ENCODE measurements at regions of chr14 and their contacts with region 1.

Region 1: DNA sequence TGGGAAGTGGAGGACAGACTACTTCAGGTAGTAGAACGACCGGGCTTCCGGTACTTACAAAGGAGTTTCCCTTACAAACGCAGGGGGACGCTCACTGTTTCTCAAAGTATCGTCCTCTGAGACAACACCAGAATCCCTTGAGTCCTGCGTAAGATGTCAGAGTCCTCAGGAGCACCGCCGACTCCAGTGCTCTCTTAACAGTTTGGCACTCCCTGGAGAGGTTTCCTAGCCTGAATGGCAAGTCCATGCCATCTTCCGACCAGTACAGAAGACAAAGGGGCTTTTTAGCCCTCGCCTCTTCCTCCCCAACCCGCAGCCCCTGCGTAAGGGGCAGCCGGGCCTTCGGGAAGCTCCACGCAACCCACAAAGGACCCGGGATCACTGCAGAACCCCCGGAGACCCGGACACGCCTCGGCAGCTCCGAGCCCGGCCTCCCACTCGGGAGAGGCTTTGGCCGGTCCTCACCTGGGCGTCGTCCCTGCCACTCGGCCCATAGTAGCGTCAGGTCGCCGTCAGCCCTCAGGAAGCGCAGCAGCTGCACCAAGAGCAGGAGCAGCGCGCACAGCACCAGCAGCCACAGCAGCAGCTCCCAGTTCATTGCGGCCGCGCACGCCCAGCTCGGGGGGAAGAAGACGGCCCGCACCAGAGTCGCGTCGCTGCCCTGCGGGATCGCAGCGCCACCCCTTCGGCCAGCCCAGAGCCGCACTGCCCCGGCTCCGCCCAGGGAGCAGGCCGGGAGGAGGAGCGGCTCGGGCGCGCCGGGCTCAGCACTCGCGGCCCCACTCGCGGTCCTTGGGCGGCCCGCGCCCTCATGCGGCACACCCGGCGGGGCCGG is at the start of gene DHRS7:
- DNase-seq: peak; percentile 39 to 90
- H3K4me3 ChIP-seq: peak within 1 kb of the TSS; percentile 75 to 92
- H3K27ac ChIP-seq: peak within 1 kb of the TSS; percentile 93 to 97
- H3K4me1 ChIP-seq: peaks cover 0 to 25% of the 10 kb centered on the region in 2 donors
- H3K27me3 ChIP-seq: no peaks in the 10 kb centered on the region
- CTCF ChIP-seq: peak in 2 of 3 experiments; percentile 51 to 59
- total RNA-seq, gene DHRS7: 34.8 TPM

Region 2: DNA sequence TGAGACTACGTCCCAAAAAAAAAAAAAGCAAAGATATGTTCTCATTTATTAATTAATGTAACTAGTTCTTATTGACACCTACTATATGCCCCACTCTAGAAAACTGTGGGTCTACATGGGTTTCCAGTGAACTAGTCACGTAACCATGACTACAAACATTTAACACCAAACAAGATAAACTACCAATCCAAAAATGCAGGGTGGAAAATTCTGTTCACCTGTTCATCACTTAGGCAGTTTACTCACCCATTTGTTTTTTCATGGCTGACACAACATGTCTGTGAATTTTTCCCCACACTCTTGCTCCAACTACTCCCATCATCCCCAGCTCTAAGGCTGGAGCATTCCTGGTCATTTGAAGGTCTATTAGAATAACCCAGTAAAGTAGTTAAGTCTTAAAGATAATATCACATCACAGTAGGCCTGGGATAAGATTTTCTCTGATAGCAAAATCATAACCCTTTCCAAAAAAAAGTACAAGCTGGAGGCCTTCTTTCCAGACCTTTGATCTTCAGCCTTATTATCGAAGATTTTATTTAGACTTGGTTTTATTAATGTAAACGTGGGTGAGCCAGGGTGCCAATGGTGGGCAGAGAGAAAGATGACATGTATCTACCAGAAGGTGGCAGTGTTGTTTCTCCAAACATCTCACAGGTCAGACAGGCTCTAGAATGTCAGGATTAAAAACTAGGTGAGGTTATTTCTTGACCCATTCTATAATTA is 1038.1 kb before region 1 on chr14:
- intact Hi-C with region 1: loop called (anchors 10 kb)
- DNase-seq: no peak
- H3K4me3 ChIP-seq: no peak overlapping the region
- H3K27ac ChIP-seq: no peak overlapping the region
- H3K4me1 ChIP-seq: no peaks in the 10 kb centered on the region
- H3K27me3 ChIP-seq: no peaks in the 10 kb centered on the region
- CTCF ChIP-seq: peak; percentile 77 to 81 (median 78)

Region 3: DNA sequence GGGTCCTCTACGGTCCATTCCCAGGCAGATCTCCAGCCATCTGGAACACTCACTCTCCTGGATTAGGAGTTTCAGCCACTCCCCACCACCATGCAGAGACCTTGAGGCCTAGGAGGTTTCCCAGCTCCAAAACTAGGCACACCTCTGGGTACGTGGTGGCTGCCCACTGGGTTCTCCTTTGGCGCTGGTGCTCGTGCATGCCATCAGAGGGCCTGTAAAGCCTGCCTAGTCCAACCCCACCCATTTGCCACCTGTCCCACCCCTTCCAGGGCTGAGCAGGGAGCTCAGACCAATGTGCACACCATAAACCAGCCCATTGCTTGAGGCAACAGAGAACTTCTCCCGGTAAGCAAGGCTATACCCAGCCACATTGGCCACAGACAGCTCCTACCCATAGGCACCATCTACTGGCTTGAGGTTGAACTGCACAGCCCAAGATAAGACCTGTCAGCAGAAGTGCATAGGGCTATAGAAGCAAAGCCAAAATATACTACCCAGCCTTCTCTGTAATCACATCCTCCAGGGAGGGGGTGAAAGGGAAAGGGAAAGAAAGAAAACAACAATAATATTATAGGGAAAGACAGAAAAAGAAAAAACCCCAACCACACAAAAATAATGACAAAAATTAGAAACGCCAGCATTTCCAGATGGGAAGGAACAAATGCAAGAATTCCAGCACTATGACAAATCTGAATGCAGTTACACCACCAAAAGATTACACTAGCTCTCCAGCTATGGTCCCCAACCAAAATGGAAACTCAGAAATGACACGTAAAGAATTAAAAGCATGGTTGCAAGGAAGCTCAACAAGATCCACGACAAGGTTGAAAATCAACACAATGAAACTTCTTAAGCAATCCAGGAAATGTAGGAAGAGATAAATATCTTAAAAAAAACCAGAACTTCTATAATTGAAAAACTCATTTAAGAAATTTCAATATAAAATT is 476.4 kb before region 1 on chr14:
- intact Hi-C with region 1: loop called (anchors 10 kb)
- DNase-seq: peak in 1 of 2 donors; percentile 83
- H3K4me3 ChIP-seq: no peak overlapping the region
- H3K27ac ChIP-seq: no peak overlapping the region
- H3K4me1 ChIP-seq: peaks cover 0 to 4% of the 10 kb centered on the region in 2 donors
- H3K27me3 ChIP-seq: no peaks in the 10 kb centered on the region
- CTCF ChIP-seq: peak; percentile 57 to 81 (median 79)

Region 4: DNA sequence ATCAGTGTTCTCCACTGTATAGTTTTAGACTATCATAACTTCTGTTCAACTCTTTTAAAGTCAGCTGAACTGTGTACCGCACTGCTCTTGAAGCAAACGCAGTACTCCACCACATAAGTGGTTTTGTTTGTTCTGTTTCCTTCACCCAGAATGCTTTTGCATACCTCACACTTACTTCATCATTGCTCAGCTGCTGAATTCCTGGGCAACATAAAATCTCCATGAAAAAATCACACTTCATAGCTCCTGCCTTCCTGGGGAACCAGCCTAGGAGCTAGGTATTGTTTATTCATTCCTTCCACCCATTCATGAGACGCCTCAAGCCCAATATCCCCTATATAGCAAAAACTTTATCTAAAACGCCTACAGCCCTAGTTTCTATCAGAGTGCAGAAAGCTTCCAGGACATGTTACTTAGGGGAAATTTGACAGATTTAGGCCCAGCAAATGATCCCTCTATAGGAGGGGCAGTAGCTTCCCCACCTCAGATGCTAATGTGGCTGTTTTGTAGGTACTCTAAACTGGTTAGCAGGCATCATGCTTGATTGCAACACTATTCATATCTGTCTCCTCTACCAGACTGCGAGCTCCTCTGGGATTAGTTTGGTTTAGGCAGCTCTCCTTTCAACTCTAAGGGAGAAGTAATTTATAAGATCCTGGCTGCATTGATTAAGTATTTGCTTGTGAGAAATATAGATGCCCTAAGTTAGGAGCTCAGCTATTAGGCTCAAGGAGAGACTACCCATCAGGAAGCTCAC is 200.5 kb before region 1 on chr14:
- intact Hi-C with region 1: no loop called
- DNase-seq: no peak
- H3K4me3 ChIP-seq: no peak overlapping the region
- H3K27ac ChIP-seq: no peak overlapping the region
- H3K4me1 ChIP-seq: no peaks in the 10 kb centered on the region
- H3K27me3 ChIP-seq: no peaks in the 10 kb centered on the region
- CTCF ChIP-seq: no peak

Region 5: GRCh38 chr14:60051721-60052221 is 113.2 kb before region 1 on chr14:
- intact Hi-C with region 1: no loop called
- DNase-seq: no peak
- H3K4me3 ChIP-seq: no peak overlapping the region
- H3K27ac ChIP-seq: no peak overlapping the region
- H3K4me1 ChIP-seq: no peaks in the 10 kb centered on the region
- H3K27me3 ChIP-seq: no peaks in the 10 kb centered on the region
- CTCF ChIP-seq: no peak

Region 6: DNA sequence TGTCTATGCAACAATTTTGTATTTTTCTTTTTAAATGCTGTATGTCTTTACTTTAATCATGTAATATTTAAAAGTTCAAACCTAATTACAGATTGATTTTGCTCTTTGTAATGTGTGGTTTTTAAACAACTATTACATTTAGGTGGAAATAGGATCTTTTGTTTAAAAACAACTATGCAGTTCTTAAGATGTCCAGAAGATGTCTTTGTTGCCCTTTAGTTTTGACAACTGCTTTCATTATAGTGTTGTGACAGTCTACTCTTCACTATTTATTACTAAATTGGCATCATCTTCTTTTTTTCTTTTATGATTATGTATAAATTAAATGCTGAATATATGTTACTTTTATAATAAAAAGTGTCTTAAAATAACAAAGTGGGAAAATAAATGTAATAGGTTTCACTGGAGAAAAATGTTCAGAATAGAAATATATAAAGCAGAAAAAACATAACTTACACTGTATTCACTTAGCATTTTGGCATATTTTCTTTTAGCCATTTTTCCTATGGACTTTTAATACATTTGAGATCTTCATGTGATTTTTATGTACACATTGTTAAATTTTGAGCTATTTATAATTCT is 100.3 kb before region 1 on chr14:
- intact Hi-C with region 1: loop called (anchors 5 kb)
- DNase-seq: no peak
- H3K4me3 ChIP-seq: no peak overlapping the region
- H3K27ac ChIP-seq: no peak overlapping the region
- H3K4me1 ChIP-seq: no peaks in the 10 kb centered on the region
- H3K27me3 ChIP-seq: no peaks in the 10 kb centered on the region
- CTCF ChIP-seq: peak; percentile 33 to 61 (median 55)

Region 7: DNA sequence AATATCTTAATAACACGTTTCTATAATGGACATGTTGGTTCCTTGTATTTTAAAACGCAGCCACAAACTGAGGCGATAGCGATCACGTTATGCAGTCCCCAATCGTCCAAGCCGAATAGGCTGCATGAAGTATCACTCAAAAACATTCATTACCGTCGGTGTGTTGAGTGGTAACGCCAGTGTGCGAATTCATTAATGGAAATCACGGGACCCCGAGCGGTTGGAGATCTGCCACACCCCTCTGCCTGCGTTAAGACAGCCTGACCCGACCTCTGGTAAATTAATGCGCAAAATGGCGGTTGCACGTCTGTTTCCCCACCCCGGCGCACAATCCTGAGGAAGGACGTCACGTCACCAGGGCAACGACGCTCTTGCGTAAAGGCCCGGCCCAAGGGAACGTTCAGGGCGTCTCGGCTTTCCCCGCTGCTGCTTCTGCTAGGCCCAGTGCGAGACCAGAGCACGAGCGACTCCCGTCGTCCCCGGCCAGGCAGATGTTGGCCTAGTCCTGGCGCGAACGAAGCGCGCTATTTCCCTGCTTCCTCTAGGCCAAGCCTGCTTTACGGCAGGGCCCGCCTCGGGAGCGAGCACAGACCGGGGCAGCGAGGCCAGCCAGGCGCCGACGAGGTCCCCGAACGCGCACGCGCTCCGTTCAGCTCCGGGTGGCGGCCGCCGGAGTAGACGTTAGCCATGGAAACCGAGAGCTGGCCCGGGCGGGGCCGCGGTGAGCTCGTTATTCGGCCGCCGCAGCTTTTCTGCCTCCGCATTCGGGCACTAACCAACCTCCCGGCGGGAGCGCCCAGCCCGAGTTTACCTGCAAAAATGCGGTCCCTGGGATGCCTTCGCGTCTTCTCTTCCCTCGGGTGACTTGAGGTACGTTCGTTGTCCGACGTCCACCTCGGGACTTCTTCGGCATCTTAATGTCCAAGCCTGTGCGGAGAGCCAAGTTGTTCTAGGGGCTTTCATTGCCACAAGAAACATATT is 73.1 kb before region 1 on chr14 and contains the start of gene PCNX4:
- intact Hi-C with region 1: loop called (anchors 1 kb)
- DNase-seq: peak; percentile 88 to 98
- H3K4me3 ChIP-seq: peak within 1 kb of the TSS; percentile 72 to 92
- H3K27ac ChIP-seq: peak within 1 kb of the TSS; percentile 95 to 96
- H3K4me1 ChIP-seq: peaks cover 0 to 11% of the 10 kb centered on the region in 2 donors
- H3K27me3 ChIP-seq: no peaks in the 10 kb centered on the region
- CTCF ChIP-seq: no peak
- total RNA-seq, gene PCNX4: 47.8 TPM

Region 8: GRCh38 chr14:60179431-60179869 is 14.5 kb after region 1 on chr14:
- intact Hi-C with region 1: no loop called
- DNase-seq: no peak
- H3K4me3 ChIP-seq: no peak overlapping the region
- H3K27ac ChIP-seq: no peak overlapping the region
- H3K4me1 ChIP-seq: peaks cover 0 to 3% of the 10 kb centered on the region in 2 donors
- H3K27me3 ChIP-seq: no peaks in the 10 kb centered on the region
- CTCF ChIP-seq: no peak

Region 9: GRCh38 chr14:60248697-60249318 is 83.9 kb after region 1 on chr14 and contains the start of gene PPM1A:
- intact Hi-C with region 1: loop called (anchors 2 kb)
- DNase-seq: peak; percentile 75 to 97
- H3K4me3 ChIP-seq: peak within 1 kb of the TSS; percentile 92 to 98
- H3K27ac ChIP-seq: peak within 1 kb of the TSS; percentile 97 to 100
- H3K4me1 ChIP-seq: peaks cover 0 to 29% of the 10 kb centered on the region in 2 donors
- H3K27me3 ChIP-seq: no peaks in the 10 kb centered on the region
- CTCF ChIP-seq: no peak
- total RNA-seq, gene PPM1A: 25.0 TPM

Region 10: GRCh38 chr14:61269321-61270083 is 1104.6 kb after region 1 on chr14:
- intact Hi-C with region 1: loop called (anchors 10 kb)
- DNase-seq: peak in 1 of 2 donors; percentile 92
- H3K4me3 ChIP-seq: peak overlapping the region; percentile 35 to 57
- H3K27ac ChIP-seq: no peak overlapping the region
- H3K4me1 ChIP-seq: no peaks in the 10 kb centered on the region
- H3K27me3 ChIP-seq: no peaks in the 10 kb centered on the region
- CTCF ChIP-seq: peak; percentile 69 to 79 (median 70)